Activated CD4-positive, alpha-beta memory T cell treated with anti-CD3 and anti-CD28 coated beads for 36 hours (primary cell): ENCODE measurements at regions of chr1 and their contacts with region 1.

Region 1: GRCh38 chr1:108746372-108747205 is at the start of gene STXBP3:
- DNase-seq: peak; percentile 100
- H3K4me3 Mint-ChIP-seq: peak within 1 kb of the TSS; percentile 95
- H3K27ac Mint-ChIP-seq: peak within 1 kb of the TSS; percentile 97
- H3K4me1 Mint-ChIP-seq: peaks cover 28% of the 10 kb centered on the region
- H3K27me3 Mint-ChIP-seq: no peaks in the 10 kb centered on the region
- total RNA-seq, gene STXBP3: 40.8 to 46.8 TPM

Region 2: GRCh38 chr1:108661030-108661620 is 85.5 kb before region 1 on chr1 and contains the start of gene HENMT1:
- CTCF ChIA-PET with region 1: no interaction called
- POLR2A ChIA-PET with region 1: no interaction called
- intact Hi-C with region 1: loop called (anchors 1 kb)
- DNase-seq: peak; percentile 86
- H3K4me3 Mint-ChIP-seq: peak within 1 kb of the TSS; percentile 82
- H3K27ac Mint-ChIP-seq: peak within 1 kb of the TSS; percentile 94
- H3K4me1 Mint-ChIP-seq: peaks cover 37% of the 10 kb centered on the region
- H3K27me3 Mint-ChIP-seq: no peaks in the 10 kb centered on the region
- total RNA-seq, gene HENMT1: 25.6 to 25.8 TPM

Region 3: GRCh38 chr1:108708691-108709660 is 37.6 kb before region 1 on chr1:
- CTCF ChIA-PET with region 1: interaction called, 3 read pairs
- POLR2A ChIA-PET with region 1: no interaction called
- intact Hi-C with region 1: loop called (anchors 1 kb)
- DNase-seq: peak; percentile 83
- H3K4me3 Mint-ChIP-seq: no peak overlapping the region
- H3K27ac Mint-ChIP-seq: no peak overlapping the region
- H3K4me1 Mint-ChIP-seq: peaks cover 28% of the 10 kb centered on the region
- H3K27me3 Mint-ChIP-seq: peaks cover 4% of the 10 kb centered on the region

Region 4: GRCh38 chr1:108728327-108728923 is 18.2 kb before region 1 on chr1:
- CTCF ChIA-PET with region 1: no interaction called
- POLR2A ChIA-PET with region 1: no interaction called
- intact Hi-C with region 1: no loop called
- DNase-seq: no peak
- H3K4me3 Mint-ChIP-seq: no peak overlapping the region
- H3K27ac Mint-ChIP-seq: no peak overlapping the region
- H3K4me1 Mint-ChIP-seq: no peaks in the 10 kb centered on the region
- H3K27me3 Mint-ChIP-seq: peaks cover 6% of the 10 kb centered on the region